CD4-positive, alpha-beta memory T cell (primary cell): ENCODE measurements at regions of chr15 and their contacts with region 1.

Region 1: GRCh38 chr15:43791993-43792760 is at the start of gene SERF2:
- DNase-seq: peak; percentile 97 to 100 (median 98)
- H3K4me3 ChIP-seq: peak within 1 kb of the TSS; percentile 97
- H3K4me3 Mint-ChIP-seq: peak within 1 kb of the TSS; percentile 93 to 97 (median 96)
- H3K27ac ChIP-seq: peak within 1 kb of the TSS; percentile 100
- H3K27ac Mint-ChIP-seq: peak within 1 kb of the TSS; percentile 97 to 99 (median 98)
- H3K4me1 ChIP-seq: peaks cover 36% of the 10 kb centered on the region
- H3K4me1 Mint-ChIP-seq: peaks cover 20 to 56% (median 37%) of the 10 kb centered on the region in 4 donors
- H3K27me3 ChIP-seq: no peaks in the 10 kb centered on the region
- H3K27me3 Mint-ChIP-seq: no peaks in the 10 kb centered on the region
- total RNA-seq, gene SERF2: 564 to 596 TPM

Region 2: DNA sequence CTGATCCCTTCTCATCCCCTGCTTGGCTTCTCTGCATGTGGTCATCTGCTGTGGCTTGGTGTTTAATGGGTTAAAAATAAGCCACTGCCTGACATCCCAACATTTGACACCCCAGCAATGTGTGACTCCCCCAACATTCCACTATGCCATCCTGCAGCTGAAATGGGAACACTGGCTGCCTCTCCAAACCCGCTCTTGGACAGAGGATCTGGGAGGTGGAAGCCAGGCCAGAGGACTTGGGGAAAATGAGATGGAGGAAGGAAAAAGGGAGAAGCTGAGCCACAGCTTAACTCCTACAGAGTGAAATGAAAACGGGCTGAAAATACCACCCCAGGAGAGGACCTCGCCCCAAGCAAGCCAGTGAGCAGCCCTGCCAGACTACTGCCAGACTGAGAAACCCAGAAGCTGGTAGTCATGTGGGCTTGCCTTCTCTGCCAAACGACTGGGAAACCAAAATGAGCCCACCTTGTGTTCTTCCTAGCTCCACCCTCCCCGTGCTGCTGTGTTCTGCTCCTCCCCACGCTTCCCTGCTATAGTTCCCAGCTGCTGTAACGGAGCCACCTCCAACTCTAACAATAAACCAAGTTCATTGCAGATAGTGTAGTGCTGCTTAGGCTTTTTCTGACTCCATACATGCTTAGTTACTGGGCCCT is 261.0 kb before region 1 on chr15:
- CTCF ChIA-PET with region 1: no interaction called
- POLR2A ChIA-PET with region 1: no interaction called
- intact Hi-C with region 1: no loop called
- DNase-seq: no peak
- H3K4me3 ChIP-seq: no peak overlapping the region
- H3K4me3 Mint-ChIP-seq: no peak overlapping the region
- H3K27ac ChIP-seq: no peak overlapping the region
- H3K27ac Mint-ChIP-seq: peak overlapping the region in 1 of 7 donors; percentile 6
- H3K4me1 ChIP-seq: no peaks in the 10 kb centered on the region
- H3K4me1 Mint-ChIP-seq: peaks cover 0 to 1% (median 0%) of the 10 kb centered on the region in 4 donors
- H3K27me3 ChIP-seq: no peaks in the 10 kb centered on the region
- H3K27me3 Mint-ChIP-seq: no peaks in the 10 kb centered on the region

Region 3: GRCh38 chr15:43723151-43723550 is 69.0 kb before region 1 on chr15:
- CTCF ChIA-PET with region 1: no interaction called
- POLR2A ChIA-PET with region 1: no interaction called
- intact Hi-C with region 1: no loop called
- DNase-seq: no peak
- H3K4me3 ChIP-seq: no peak overlapping the region
- H3K4me3 Mint-ChIP-seq: no peak overlapping the region
- H3K27ac ChIP-seq: no peak overlapping the region
- H3K27ac Mint-ChIP-seq: no peak overlapping the region
- H3K4me1 ChIP-seq: no peaks in the 10 kb centered on the region
- H3K4me1 Mint-ChIP-seq: no peaks in the 10 kb centered on the region
- H3K27me3 ChIP-seq: no peaks in the 10 kb centered on the region
- H3K27me3 Mint-ChIP-seq: peaks cover 2 to 7% of the 10 kb centered on the region in 2 donors

Region 4: GRCh38 chr15:43769584-43770228 is 22.5 kb before region 1 on chr15:
- CTCF ChIA-PET with region 1: interaction called, 11 read pairs
- POLR2A ChIA-PET with region 1: interaction called, 6 read pairs
- intact Hi-C with region 1: no loop called
- DNase-seq: peak; percentile 50 to 59 (median 55)
- H3K4me3 ChIP-seq: no peak overlapping the region
- H3K4me3 Mint-ChIP-seq: no peak overlapping the region
- H3K27ac ChIP-seq: no peak overlapping the region
- H3K27ac Mint-ChIP-seq: peak overlapping the region in 6 of 7 donors; percentile 6 to 79 (median 60)
- H3K4me1 ChIP-seq: no peaks in the 10 kb centered on the region
- H3K4me1 Mint-ChIP-seq: peaks cover 0 to 7% (median 2%) of the 10 kb centered on the region in 4 donors
- H3K27me3 ChIP-seq: no peaks in the 10 kb centered on the region
- H3K27me3 Mint-ChIP-seq: no peaks in the 10 kb centered on the region